ENCODE measurements at regions of chr14 and their contacts with region 1.

Region 1: GRCh38 chr14:33792720-33793368 is 158.0 kb downstream of the EGLN3 start:
- DNase-seq: peak; percentile 73 to 87 (median 79)
- ATAC-seq: peak; percentile 72 to 94 (median 87)
- H3K4me3 ChIP-seq: peak overlapping the region in 9 of 12 donors; percentile 15 to 49 (median 30)
- H3K27ac ChIP-seq: peak overlapping the region in 1 of 12 donors; percentile 32
- H3K4me1 ChIP-seq: peaks cover 0 to 13% (median 2%) of the 10 kb centered on the region in 12 donors
- H3K27me3 ChIP-seq: no peaks in the 10 kb centered on the region
- CTCF ChIP-seq: peak; percentile 91 to 98 (median 96)
- POLR2A ChIP-seq: no peak

Region 2: DNA sequence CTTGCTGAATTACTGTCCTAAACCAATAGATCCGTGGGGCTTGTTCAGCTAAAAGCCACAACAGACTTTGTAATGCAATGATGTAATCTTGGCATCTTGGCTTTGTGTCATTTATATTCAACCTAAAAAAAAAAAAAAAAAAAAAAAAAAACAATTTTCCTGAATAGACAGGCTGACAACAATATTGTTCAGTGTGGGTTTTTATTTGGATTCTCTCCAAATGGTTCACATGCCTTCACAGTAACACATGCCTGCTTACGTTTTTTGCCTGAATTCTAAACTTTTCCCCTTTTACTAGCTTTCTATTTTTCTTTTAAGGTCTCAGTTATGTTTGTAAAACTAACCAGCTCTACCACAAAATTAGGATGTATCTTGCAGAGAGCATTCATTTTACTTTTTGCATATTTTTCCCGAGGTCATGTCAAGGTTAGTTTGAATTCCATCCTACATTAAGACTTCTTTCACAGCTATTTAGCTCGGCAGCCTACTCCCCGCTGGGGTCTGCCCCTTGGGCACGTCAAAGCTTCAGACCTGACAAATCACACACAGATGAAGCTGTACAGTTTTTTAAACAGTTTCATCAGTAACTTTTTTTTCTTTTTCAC is 1067.9 kb before region 1 on chr14:
- intact Hi-C with region 1: loop called in 1 of 10 experiments (anchors 10 kb)
- DNase-seq: no peak
- ATAC-seq: no peak
- H3K4me3 ChIP-seq: peak overlapping the region in 6 of 12 donors; percentile 3 to 17 (median 10)
- H3K27ac ChIP-seq: peak overlapping the region in 6 of 12 donors; percentile 1 to 49 (median 16)
- H3K4me1 ChIP-seq: peaks cover 0 to 50% (median 13%) of the 10 kb centered on the region in 12 donors
- H3K27me3 ChIP-seq: no peaks in the 10 kb centered on the region
- CTCF ChIP-seq: no peak
- POLR2A ChIP-seq: no peak

Region 3: GRCh38 chr14:32913719-32914118 is 879.1 kb before region 1 on chr14:
- intact Hi-C with region 1: loop called in 1 of 10 experiments (anchors 10 kb)
- DNase-seq: no peak
- ATAC-seq: no peak
- H3K4me3 ChIP-seq: no peak overlapping the region
- H3K27ac ChIP-seq: no peak overlapping the region
- H3K4me1 ChIP-seq: no peaks in the 10 kb centered on the region
- H3K27me3 ChIP-seq: peaks cover 0 to 11% (median 0%) of the 10 kb centered on the region in 9 donors
- CTCF ChIP-seq: peak in 3 of 12 donors; percentile 5 to 21 (median 11)
- POLR2A ChIP-seq: no peak

Region 4: GRCh38 chr14:33198684-33199083 is 594.2 kb before region 1 on chr14:
- intact Hi-C with region 1: loop called in 1 of 10 experiments (anchors 10 kb)
- DNase-seq: no peak
- ATAC-seq: peak in 1 of 4 donors; percentile 20
- H3K4me3 ChIP-seq: no peak overlapping the region
- H3K27ac ChIP-seq: no peak overlapping the region
- H3K4me1 ChIP-seq: no peaks in the 10 kb centered on the region
- H3K27me3 ChIP-seq: no peaks in the 10 kb centered on the region
- CTCF ChIP-seq: no peak
- POLR2A ChIP-seq: no peak

Region 5: GRCh38 chr14:33254861-33255395 is 537.9 kb before region 1 on chr14:
- intact Hi-C with region 1: no loop called
- DNase-seq: peak in 1 of 5 donors; percentile 25
- ATAC-seq: no peak
- H3K4me3 ChIP-seq: no peak overlapping the region
- H3K27ac ChIP-seq: no peak overlapping the region
- H3K4me1 ChIP-seq: peaks cover 0 to 10% (median 0%) of the 10 kb centered on the region in 12 donors
- H3K27me3 ChIP-seq: no peaks in the 10 kb centered on the region
- CTCF ChIP-seq: no peak
- POLR2A ChIP-seq: no peak

Region 6: GRCh38 chr14:33676135-33676566 is 116.7 kb before region 1 on chr14:
- intact Hi-C with region 1: loop called in 6 of 10 experiments (anchors 2 to 10 kb)
- DNase-seq: peak; percentile 19 to 54 (median 36)
- ATAC-seq: peak in 3 of 4 donors; percentile 73 to 90 (median 81)
- H3K4me3 ChIP-seq: peak overlapping the region in 8 of 12 donors; percentile 27 to 46 (median 36)
- H3K27ac ChIP-seq: peak overlapping the region in 1 of 12 donors; percentile 21
- H3K4me1 ChIP-seq: peaks cover 0 to 4% (median 0%) of the 10 kb centered on the region in 12 donors
- H3K27me3 ChIP-seq: peaks cover 0 to 4% (median 0%) of the 10 kb centered on the region in 9 donors
- CTCF ChIP-seq: peak in 11 of 12 donors; percentile 23 to 53 (median 37)
- POLR2A ChIP-seq: no peak

Region 7: GRCh38 chr14:33871394-33871793 is 78.5 kb after region 1 on chr14:
- intact Hi-C with region 1: no loop called
- DNase-seq: no peak
- ATAC-seq: no peak
- H3K4me3 ChIP-seq: no peak overlapping the region
- H3K27ac ChIP-seq: no peak overlapping the region
- H3K4me1 ChIP-seq: no peaks in the 10 kb centered on the region
- H3K27me3 ChIP-seq: no peaks in the 10 kb centered on the region
- CTCF ChIP-seq: no peak
- POLR2A ChIP-seq: no peak